Endothelial cell of umbilical vein (primary cell): ENCODE measurements at regions of chr9 and their contacts with region 1.

Region 1: GRCh38 chr9:70413798-70414775 is at the start of gene KLF9:
- DNase-seq: peak; percentile 99
- H3K4me3 ChIP-seq: peak within 1 kb of the TSS; percentile 73 to 94 (median 91)
- H3K27ac ChIP-seq: peak within 1 kb of the TSS; percentile 84
- H3K4me1 ChIP-seq: peaks cover 33% of the 10 kb centered on the region
- H3K27me3 ChIP-seq: no peaks in the 10 kb centered on the region
- CTCF ChIP-seq: no peak
- POLR2A ChIP-seq: no peak
- total RNA-seq, gene KLF9: 17.2 and 23.1 TPM in 2 replicates

Region 2: GRCh38 chr9:70278312-70278711 is 135.8 kb before region 1 on chr9:
- CTCF ChIA-PET with region 1: no interaction called
- POLR2A ChIA-PET with region 1: no interaction called
- dilution Hi-C with region 1: no loop called
- intact Hi-C with region 1: no loop called
- DNase-seq: no peak
- H3K4me3 ChIP-seq: no peak overlapping the region
- H3K27ac ChIP-seq: no peak overlapping the region
- H3K4me1 ChIP-seq: no peaks in the 10 kb centered on the region
- H3K27me3 ChIP-seq: no peaks in the 10 kb centered on the region
- CTCF ChIP-seq: no peak
- POLR2A ChIP-seq: no peak

Region 3: GRCh38 chr9:70340572-70340971 is 73.5 kb before region 1 on chr9:
- CTCF ChIA-PET with region 1: interaction called, 16 read pairs
- POLR2A ChIA-PET with region 1: no interaction called
- dilution Hi-C with region 1: no loop called
- intact Hi-C with region 1: no loop called
- DNase-seq: peak; percentile 40
- H3K4me3 ChIP-seq: no peak overlapping the region
- H3K27ac ChIP-seq: no peak overlapping the region
- H3K4me1 ChIP-seq: no peaks in the 10 kb centered on the region
- H3K27me3 ChIP-seq: no peaks in the 10 kb centered on the region
- CTCF ChIP-seq: peak in 1 of 2 donors; percentile 4
- POLR2A ChIP-seq: no peak

Region 4: DNA sequence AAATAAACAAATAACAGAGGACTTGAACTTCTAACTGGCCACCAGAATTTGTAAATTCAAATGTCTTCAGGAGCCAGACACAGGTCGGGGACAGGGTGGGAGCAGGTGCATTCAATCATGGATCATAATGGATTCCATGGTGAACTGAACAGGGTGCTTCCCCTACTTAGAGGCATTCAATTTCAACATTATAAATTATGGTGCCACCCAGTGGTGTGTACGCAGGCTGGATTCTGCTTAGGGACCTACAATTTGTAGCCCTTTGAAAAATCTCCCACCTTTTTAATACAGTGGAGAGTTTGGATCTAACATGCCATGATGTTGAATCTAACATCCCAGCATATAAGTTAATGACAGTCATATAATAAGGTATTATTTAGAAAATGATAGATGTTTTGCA is 21.9 kb before region 1 on chr9:
- CTCF ChIA-PET with region 1: interaction called, 8 read pairs
- POLR2A ChIA-PET with region 1: interaction called, 5 read pairs
- dilution Hi-C with region 1: no loop called
- intact Hi-C with region 1: loop called (anchors 2 kb)
- DNase-seq: peak; percentile 12
- H3K4me3 ChIP-seq: no peak overlapping the region
- H3K27ac ChIP-seq: no peak overlapping the region
- H3K4me1 ChIP-seq: peaks cover 32% of the 10 kb centered on the region
- H3K27me3 ChIP-seq: no peaks in the 10 kb centered on the region
- CTCF ChIP-seq: peak in 1 of 2 donors; percentile 15
- POLR2A ChIP-seq: no peak

Region 5: DNA sequence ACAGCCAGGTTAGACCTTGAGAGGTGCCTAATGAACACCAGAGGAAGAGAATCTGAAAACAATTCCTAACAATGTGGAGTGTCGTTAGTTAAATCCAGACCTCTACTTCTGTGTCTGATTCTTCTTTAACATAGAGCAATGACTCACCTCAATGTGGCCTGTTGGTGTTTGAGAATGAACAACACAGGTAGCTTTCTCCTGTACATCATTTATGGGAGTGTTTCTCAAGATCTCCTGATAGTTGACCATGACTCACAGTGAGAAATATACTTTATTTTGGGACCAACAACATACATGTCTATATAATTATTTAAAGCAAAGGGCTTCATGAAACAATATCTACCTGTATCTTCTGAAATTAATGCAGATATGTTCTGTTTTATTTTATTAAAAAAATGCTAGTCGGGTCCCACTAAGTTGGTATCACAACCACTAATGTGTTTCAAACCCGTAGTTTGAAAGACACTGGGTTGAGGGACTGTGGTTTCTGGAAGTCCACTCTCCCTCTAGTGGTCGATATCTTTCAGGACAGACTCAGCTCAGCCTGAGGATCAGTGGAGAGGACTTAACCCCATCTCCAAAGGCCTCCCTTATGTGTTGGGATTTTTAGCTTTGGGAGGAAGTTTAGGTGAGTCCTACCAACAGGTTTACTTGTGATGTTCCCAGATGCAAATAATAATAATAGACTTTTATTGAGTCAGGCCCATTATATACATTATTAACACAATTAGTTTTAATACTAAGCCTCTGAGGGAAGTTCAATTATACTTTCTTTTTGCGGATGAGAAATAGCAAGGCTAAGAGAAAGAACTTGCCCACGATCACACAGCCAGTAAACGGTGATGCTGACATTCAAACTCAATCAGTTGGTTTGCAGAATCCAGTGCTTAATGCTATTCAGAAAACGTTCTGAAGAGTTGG is 70.4 kb after region 1 on chr9:
- CTCF ChIA-PET with region 1: interaction called, 76 read pairs
- POLR2A ChIA-PET with region 1: interaction called, 8 read pairs
- dilution Hi-C with region 1: no loop called
- intact Hi-C with region 1: loop called (anchors 1 kb)
- DNase-seq: peak; percentile 81
- H3K4me3 ChIP-seq: no peak overlapping the region
- H3K27ac ChIP-seq: no peak overlapping the region
- H3K4me1 ChIP-seq: peaks cover 23% of the 10 kb centered on the region
- H3K27me3 ChIP-seq: no peaks in the 10 kb centered on the region
- CTCF ChIP-seq: peak; percentile 68 to 89
- POLR2A ChIP-seq: no peak

Region 6: DNA sequence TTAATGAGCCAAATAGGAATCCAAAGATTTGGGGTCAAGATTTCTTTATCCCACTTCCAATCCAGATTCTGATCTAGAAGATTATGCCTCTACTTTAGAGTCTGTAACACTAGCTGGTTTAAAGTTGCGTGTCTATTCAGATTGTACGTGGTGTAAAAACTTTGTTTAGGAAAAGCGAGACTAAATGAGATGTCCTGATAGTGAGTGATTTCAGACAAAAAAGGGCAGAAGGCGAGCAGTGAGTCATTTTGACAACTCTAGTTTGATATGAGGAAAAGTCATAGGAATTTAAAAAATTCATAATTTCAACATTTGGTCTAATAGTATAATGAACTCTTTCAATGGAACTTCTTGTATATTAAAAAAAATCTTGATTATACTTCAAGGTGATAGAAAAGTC is 120.0 kb after region 1 on chr9:
- CTCF ChIA-PET with region 1: no interaction called
- POLR2A ChIA-PET with region 1: interaction called, 9 read pairs
- dilution Hi-C with region 1: no loop called
- intact Hi-C with region 1: loop called (anchors 5 kb)
- DNase-seq: peak; percentile 80
- H3K4me3 ChIP-seq: no peak overlapping the region
- H3K27ac ChIP-seq: peak overlapping the region; percentile 84
- H3K4me1 ChIP-seq: peaks cover 32% of the 10 kb centered on the region
- H3K27me3 ChIP-seq: no peaks in the 10 kb centered on the region
- CTCF ChIP-seq: no peak
- POLR2A ChIP-seq: no peak